CD14-positive monocyte (primary cell): ENCODE measurements at regions of chr2 and their contacts with region 1.

Region 1: GRCh38 chr2:98412751-98413458 is 31.8 kb upstream of the INPP4A start:
- DNase-seq: peak; percentile 64 to 78 (median 67)
- H3K4me3 ChIP-seq: no peak overlapping the region
- H3K4me3 Mint-ChIP-seq: no peak overlapping the region
- H3K27ac ChIP-seq: no peak overlapping the region
- H3K27ac Mint-ChIP-seq: no peak overlapping the region
- H3K4me1 ChIP-seq: peaks cover 0 to 2% of the 10 kb centered on the region in 2 donors
- H3K4me1 Mint-ChIP-seq: peaks cover 3% of the 10 kb centered on the region
- H3K27me3 ChIP-seq: peaks cover 0 to 2% of the 10 kb centered on the region in 2 donors
- H3K27me3 Mint-ChIP-seq: peaks cover 0 to 6% (median 3%) of the 10 kb centered on the region in 3 donors
- CTCF ChIP-seq: peak; percentile 82

Region 2: GRCh38 chr2:98123286-98123685 is 289.6 kb before region 1 on chr2:
- intact Hi-C with region 1: no loop called
- DNase-seq: peak; percentile 30 to 52 (median 50)
- H3K4me3 ChIP-seq: no peak overlapping the region
- H3K4me3 Mint-ChIP-seq: no peak overlapping the region
- H3K27ac ChIP-seq: no peak overlapping the region
- H3K27ac Mint-ChIP-seq: peak overlapping the region in 2 of 7 donors; percentile 40 to 47
- H3K4me1 ChIP-seq: peaks cover 8 to 10% of the 10 kb centered on the region in 2 donors
- H3K4me1 Mint-ChIP-seq: peaks cover 16% of the 10 kb centered on the region
- H3K27me3 ChIP-seq: no peaks in the 10 kb centered on the region
- H3K27me3 Mint-ChIP-seq: peaks cover 15 to 18% (median 17%) of the 10 kb centered on the region in 3 donors
- CTCF ChIP-seq: no peak

Region 3: GRCh38 chr2:98518090-98518489 is 105.2 kb after region 1 on chr2:
- intact Hi-C with region 1: loop called (anchors 2 to 5 kb)
- DNase-seq: peak; percentile 70 to 86 (median 85)
- H3K4me3 ChIP-seq: no peak overlapping the region
- H3K4me3 Mint-ChIP-seq: no peak overlapping the region
- H3K27ac ChIP-seq: peak overlapping the region; percentile 13 to 79
- H3K27ac Mint-ChIP-seq: peak overlapping the region in 5 of 7 donors; percentile 13 to 90 (median 25)
- H3K4me1 ChIP-seq: peaks cover 38 to 42% of the 10 kb centered on the region in 2 donors
- H3K4me1 Mint-ChIP-seq: peaks cover 55% of the 10 kb centered on the region
- H3K27me3 ChIP-seq: no peaks in the 10 kb centered on the region
- H3K27me3 Mint-ChIP-seq: no peaks in the 10 kb centered on the region
- CTCF ChIP-seq: peak; percentile 93